Pancreas (tissue), 10 donors: ENCODE measurements at regions of chr12 and their contacts with region 1.

Region 1: GRCh38 chr12:46320731-46321130 is 51.8 kb downstream of the SLC38A2 start:
- DNase-seq: no peak
- ATAC-seq: no peak
- H3K4me3 ChIP-seq: no peak overlapping the region
- H3K27ac ChIP-seq: no peak overlapping the region
- H3K4me1 ChIP-seq: no peaks in the 10 kb centered on the region
- H3K27me3 ChIP-seq: no peaks in the 10 kb centered on the region
- CTCF ChIP-seq: no peak

Region 2: DNA sequence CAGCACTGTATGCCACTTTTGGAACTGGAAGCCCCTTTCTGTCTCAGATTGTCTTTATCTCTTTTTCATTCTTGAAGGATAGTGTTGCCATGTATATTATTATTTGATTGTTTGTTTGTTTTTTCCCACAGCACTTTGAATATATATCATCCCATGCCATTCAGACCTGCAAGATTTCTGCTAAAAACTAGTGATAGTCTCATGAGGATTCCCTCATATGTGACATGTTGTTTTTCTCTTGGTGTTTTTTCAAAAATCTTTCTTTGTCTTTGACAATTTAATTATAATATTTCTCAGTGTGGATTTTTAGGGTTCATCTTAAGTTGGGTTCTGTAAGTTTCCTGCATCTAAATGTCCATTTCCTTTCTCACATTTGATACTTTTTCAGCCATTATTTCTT is 293.6 kb before region 1 on chr12:
- intact Hi-C with region 1: no loop called
- DNase-seq: no peak
- ATAC-seq: no peak
- H3K4me3 ChIP-seq: no peak overlapping the region
- H3K27ac ChIP-seq: no peak overlapping the region
- H3K4me1 ChIP-seq: no peaks in the 10 kb centered on the region
- H3K27me3 ChIP-seq: no peaks in the 10 kb centered on the region
- CTCF ChIP-seq: no peak

Region 3: GRCh38 chr12:46160101-46160980 is 160.4 kb before region 1 on chr12:
- intact Hi-C with region 1: loop called in 1 of 3 experiments (anchors 10 kb)
- DNase-seq: no peak
- ATAC-seq: peak in 3 of 4 donors; percentile 34 to 56 (median 46)
- H3K4me3 ChIP-seq: no peak overlapping the region
- H3K27ac ChIP-seq: no peak overlapping the region
- H3K4me1 ChIP-seq: no peaks in the 10 kb centered on the region
- H3K27me3 ChIP-seq: no peaks in the 10 kb centered on the region
- CTCF ChIP-seq: no peak